ENCODE measurements at regions of chr11 and their contacts with region 1.

Region 1: DNA sequence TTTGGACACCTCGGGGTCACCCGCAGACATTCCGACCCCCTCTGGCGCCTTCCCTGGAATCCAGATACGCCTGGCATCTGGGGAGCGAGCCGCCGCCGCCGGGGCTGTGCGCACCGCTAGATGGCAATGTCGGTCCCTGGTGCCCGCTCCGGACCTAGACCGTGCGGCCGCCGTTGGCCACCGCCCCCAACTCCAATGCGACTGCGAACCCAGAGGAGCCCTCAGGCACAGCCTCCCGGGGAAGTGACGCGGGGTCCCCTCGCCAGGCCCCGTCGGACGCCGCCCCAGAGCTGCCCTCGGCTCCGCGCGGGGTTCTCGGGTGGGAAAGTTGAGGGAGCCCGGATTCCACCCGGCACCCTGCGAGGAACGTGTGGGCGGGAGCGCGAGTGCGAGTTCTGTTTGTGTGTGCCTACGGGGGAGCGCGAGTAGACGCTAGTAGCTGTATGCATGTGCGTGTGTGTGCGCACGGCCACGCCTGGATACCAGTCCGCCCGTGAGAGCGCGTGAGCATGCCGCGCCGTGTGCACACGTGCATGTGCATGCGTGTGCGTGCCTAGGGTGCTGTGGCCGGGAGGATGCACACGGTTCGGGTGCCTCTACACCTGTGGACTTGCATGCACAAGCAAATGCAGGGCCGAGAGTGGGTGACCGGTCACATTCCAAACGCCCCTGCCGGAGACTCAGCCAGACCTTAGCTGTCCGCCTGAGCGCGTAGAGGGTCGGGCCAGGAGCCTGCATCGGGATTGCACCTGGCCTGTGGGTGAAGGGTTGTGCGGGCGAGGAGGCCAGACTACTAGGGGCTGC is 1.9 kb downstream of the CHRM4 start:
- DNase-seq: peak; percentile 90
- H3K4me3 ChIP-seq: peak overlapping the region; percentile 18 to 67 (median 46)
- H3K27ac ChIP-seq: peak overlapping the region in 3 of 8 donors; percentile 6 to 74 (median 28)
- H3K4me1 ChIP-seq: peaks cover 25 to 74% (median 51%) of the 10 kb centered on the region in 6 donors
- H3K27me3 ChIP-seq: peaks cover 11 to 91% (median 65%) of the 10 kb centered on the region in 7 donors
- CTCF ChIP-seq: peak; percentile 18 to 87 (median 70)
- POLR2A ChIP-seq: no peak

Region 2: DNA sequence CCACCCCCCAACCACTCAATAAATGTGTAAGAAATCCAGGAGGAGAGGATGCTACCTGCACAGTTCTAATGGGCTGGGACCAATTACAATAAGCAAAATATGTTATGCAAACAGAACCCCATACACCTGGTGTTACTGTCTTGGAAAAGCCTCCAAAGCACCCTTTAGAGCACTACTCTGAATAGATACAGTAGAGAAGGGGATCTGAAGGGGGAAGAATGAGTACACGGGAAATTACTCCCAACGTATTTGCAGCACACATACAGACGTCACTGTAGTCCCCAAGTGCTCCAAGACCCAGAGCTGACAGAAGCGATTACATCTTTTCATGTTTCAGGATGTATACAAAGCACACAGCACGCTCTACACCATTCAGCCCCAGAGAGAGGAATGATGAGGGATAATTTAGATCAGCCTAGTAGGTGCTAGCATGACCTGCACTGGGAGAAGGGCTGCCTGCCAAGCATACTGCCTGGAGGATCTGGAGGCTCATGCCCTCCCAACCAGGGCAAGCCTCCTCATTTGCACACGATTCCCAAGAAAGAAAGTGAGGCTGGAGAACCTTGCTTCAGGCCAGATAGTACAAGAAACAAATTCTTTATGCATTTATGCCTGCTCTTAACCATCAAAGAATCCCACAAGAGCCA is 140.4 kb after region 1 on chr11:
- intact Hi-C with region 1: loop called (anchors 5 kb)
- DNase-seq: no peak
- H3K4me3 ChIP-seq: no peak overlapping the region
- H3K27ac ChIP-seq: no peak overlapping the region
- H3K4me1 ChIP-seq: peaks cover 9 to 64% (median 27%) of the 10 kb centered on the region in 6 donors
- H3K27me3 ChIP-seq: no peaks in the 10 kb centered on the region
- CTCF ChIP-seq: no peak
- POLR2A ChIP-seq: no peak

Region 3: DNA sequence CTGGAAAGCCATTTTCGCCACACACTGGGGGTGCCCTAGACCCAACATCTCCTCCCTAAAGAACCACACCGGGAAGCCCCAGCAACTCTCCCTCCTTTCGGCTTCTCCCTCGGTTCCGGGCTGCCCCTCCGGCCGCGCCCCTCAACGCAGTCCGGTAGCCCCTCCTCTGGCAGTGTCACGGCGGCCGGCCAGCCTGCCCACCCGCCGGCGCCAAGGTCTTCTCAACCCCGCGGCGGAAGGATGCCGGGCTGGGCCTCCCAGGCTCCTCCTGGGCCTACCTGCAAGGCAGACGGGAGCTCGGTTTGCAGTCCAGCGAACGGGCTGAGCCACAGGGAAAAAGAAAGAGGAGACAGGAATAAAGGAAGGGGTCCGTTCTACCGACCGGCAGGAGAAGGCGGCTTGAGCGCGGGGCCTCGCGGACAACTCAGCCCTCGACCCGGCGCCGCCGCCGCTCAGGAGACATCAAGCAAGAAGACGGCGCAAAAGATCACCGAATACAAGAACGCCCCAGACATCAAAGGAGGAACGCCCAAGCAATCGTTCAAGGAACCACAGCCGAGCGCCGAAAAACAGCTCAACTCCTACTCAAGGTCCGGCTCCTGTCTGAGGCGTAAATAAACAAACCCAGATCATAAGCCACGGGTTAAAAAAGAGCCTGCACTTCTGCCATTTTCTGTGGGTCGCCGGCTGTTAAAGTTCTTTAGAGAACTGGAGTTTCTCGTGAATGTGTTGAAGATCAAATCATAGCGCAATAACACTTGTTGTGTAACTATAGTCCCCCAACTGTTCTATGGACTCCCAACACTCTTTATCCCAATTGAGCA is 204.1 kb after region 1 on chr11 and contains the start of gene AMBRA1:
- intact Hi-C with region 1: loop called (anchors 10 kb)
- DNase-seq: peak; percentile 93
- H3K4me3 ChIP-seq: peak within 1 kb of the TSS; percentile 81 to 96 (median 92)
- H3K27ac ChIP-seq: peak within 1 kb of the TSS; percentile 59 to 91 (median 85)
- H3K4me1 ChIP-seq: peaks cover 25 to 59% (median 54%) of the 10 kb centered on the region in 6 donors
- H3K27me3 ChIP-seq: no peaks in the 10 kb centered on the region
- CTCF ChIP-seq: no peak
- POLR2A ChIP-seq: no peak
- total RNA-seq, gene AMBRA1: 36.7 to 54.6 (median 38.9) TPM

Measured in spleen (tissue), 13 donors.